ENCODE measurements at regions of chr20 and their contacts with region 1.

Region 1: DNA sequence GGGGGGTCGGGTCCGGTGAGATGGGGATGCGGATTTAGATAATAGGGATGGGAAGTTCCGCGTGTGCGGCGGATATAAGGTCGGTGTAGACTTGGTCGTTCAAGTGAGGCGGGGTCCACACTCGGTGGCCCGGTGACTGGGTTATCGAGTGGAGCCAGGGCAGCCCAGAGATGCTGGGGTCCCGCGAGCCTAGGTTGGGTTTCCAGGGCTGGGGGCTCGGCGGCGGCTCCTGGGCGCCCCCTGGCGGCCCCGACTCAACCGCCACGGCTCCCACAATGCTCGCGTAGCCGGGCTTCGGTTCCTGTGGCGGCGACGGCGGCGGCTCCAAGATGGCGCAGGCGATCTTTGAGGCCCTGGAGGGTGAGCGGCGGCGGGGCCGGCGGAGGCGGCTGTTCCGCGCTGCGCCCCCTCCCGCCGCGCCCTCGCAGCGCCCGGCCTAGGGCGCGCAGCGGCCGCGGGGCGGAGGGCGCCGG is at the start of gene ZNF341:
- DNase-seq: peak; percentile 80 to 92 (median 88)
- H3K4me3 ChIP-seq: peak within 1 kb of the TSS; percentile 61
- H3K4me3 Mint-ChIP-seq: peak within 1 kb of the TSS; percentile 89 to 93 (median 90)
- H3K27ac ChIP-seq: peak within 1 kb of the TSS; percentile 60
- H3K27ac Mint-ChIP-seq: peak within 1 kb of the TSS; percentile 90 to 98 (median 96)
- H3K4me1 ChIP-seq: peaks cover 16% of the 10 kb centered on the region
- H3K4me1 Mint-ChIP-seq: peaks cover 24 to 28% (median 25%) of the 10 kb centered on the region in 3 donors
- H3K27me3 ChIP-seq: no peaks in the 10 kb centered on the region
- H3K27me3 Mint-ChIP-seq: peaks cover 0 to 2% of the 10 kb centered on the region in 2 donors
- total RNA-seq, gene ZNF341: 4.5 to 5.0 TPM

Region 2: DNA sequence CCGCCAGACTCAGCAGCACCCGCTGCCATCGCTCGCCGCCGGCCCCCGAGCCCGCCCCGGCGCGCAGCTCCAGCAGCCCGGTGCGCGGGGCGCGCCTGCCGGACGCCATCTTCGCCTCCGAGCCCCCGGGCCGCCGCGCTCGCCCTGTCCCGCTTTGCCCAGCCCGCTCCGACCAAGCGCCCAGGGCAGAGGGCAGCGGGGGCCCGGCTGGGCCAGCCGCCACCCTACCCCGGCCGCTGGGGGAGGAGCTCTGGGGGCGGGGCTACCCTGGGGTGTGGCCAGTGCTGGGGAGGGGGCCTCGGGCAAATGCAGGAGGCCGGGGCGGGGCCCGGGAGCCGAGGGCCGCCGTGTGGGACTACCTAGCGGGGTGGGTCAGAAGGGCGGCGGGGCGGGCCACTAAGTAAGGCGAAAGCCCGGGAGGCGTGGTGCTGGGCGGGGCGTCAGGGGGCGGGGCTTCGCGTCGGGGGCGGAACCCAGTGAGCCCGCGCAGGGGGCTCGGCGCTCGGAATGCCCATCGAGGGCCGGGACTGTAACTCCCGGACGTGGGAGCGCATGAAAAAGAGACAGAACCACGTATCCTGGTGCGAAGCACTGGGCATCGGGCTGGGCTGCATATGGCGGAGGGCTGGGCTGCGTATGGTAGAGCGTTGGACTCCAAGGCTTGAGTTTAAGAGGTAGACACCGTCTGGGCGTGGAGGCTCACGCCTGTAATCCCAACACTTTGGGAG is 288.1 kb before region 1 on chr20 and contains the start of gene SNTA1:
- CTCF ChIA-PET with region 1: interaction called, 3 read pairs
- POLR2A ChIA-PET with region 1: interaction called, 11 read pairs
- DNase-seq: peak; percentile 70 to 92 (median 83)
- H3K4me3 ChIP-seq: peak within 1 kb of the TSS; percentile 87
- H3K4me3 Mint-ChIP-seq: peak within 1 kb of the TSS; percentile 89 to 96 (median 93)
- H3K27ac ChIP-seq: peak within 1 kb of the TSS; percentile 65
- H3K27ac Mint-ChIP-seq: peak within 1 kb of the TSS; percentile 88 to 98 (median 94)
- H3K4me1 ChIP-seq: peaks cover 19% of the 10 kb centered on the region
- H3K4me1 Mint-ChIP-seq: peaks cover 17 to 26% (median 19%) of the 10 kb centered on the region in 3 donors
- H3K27me3 ChIP-seq: no peaks in the 10 kb centered on the region
- H3K27me3 Mint-ChIP-seq: peaks cover 0 to 1% of the 10 kb centered on the region in 2 donors
- total RNA-seq, gene SNTA1: 4.6 to 5.6 TPM

Region 3: GRCh38 chr20:33489495-33490022 is 242.2 kb before region 1 on chr20:
- CTCF ChIA-PET with region 1: no interaction called
- POLR2A ChIA-PET with region 1: interaction called, 10 read pairs
- DNase-seq: peak; percentile 99
- H3K4me3 ChIP-seq: peak overlapping the region; percentile 68
- H3K4me3 Mint-ChIP-seq: peak overlapping the region; percentile 83 to 95 (median 91)
- H3K27ac ChIP-seq: peak overlapping the region; percentile 88
- H3K27ac Mint-ChIP-seq: peak overlapping the region; percentile 91 to 97 (median 94)
- H3K4me1 ChIP-seq: peaks cover 10% of the 10 kb centered on the region
- H3K4me1 Mint-ChIP-seq: peaks cover 13 to 34% (median 19%) of the 10 kb centered on the region in 3 donors
- H3K27me3 ChIP-seq: no peaks in the 10 kb centered on the region
- H3K27me3 Mint-ChIP-seq: peaks cover 0 to 2% of the 10 kb centered on the region in 2 donors

Region 4: DNA sequence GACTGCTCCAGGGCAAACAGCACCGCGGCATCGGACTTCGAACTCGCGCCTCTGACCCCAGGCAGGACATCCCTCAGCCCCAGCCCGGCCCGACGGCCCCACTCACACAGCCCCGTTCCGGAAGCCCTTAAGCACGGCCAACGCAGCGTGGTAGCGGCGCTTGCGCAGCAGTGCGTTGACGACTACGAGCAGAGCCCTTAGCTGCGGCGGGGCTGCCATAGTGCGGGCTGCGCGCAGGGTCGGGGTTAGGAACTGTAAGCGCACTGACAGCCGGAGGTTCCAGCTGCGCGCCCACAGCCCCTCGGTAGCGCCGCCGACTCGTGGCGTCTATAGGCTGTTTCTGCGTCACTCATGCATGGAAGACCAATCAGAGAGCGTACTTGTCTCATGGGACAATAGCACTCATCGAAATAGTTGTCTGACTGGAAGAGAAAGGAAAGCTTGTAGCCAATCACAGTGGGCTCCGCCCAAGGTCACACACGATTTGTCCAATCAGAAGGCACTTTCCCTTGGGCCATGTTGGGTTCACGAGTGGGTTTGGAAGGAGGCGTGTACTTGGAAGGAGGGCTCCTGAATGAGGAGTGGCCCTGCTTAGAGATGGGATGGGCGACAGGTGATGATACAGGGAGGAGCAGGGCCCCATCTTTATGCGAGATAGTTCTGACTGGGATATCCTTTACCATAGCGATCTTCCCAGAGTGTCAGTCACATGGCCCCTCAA is 11.6 kb before region 1 on chr20 and contains the start of gene PXMP4:
- CTCF ChIA-PET with region 1: interaction called, 7 read pairs
- POLR2A ChIA-PET with region 1: interaction called, 36 read pairs
- DNase-seq: peak; percentile 76 to 94 (median 92)
- H3K4me3 ChIP-seq: peak within 1 kb of the TSS; percentile 84
- H3K4me3 Mint-ChIP-seq: peak within 1 kb of the TSS; percentile 80 to 95 (median 87)
- H3K27ac ChIP-seq: peak within 1 kb of the TSS; percentile 75
- H3K27ac Mint-ChIP-seq: peak within 1 kb of the TSS; percentile 70 to 98 (median 92)
- H3K4me1 ChIP-seq: peaks cover 20% of the 10 kb centered on the region
- H3K4me1 Mint-ChIP-seq: peaks cover 28 to 41% (median 35%) of the 10 kb centered on the region in 3 donors
- H3K27me3 ChIP-seq: no peaks in the 10 kb centered on the region
- H3K27me3 Mint-ChIP-seq: peaks cover 0 to 2% of the 10 kb centered on the region in 2 donors
- total RNA-seq, gene PXMP4: 8.4 to 9.1 TPM

Region 5: DNA sequence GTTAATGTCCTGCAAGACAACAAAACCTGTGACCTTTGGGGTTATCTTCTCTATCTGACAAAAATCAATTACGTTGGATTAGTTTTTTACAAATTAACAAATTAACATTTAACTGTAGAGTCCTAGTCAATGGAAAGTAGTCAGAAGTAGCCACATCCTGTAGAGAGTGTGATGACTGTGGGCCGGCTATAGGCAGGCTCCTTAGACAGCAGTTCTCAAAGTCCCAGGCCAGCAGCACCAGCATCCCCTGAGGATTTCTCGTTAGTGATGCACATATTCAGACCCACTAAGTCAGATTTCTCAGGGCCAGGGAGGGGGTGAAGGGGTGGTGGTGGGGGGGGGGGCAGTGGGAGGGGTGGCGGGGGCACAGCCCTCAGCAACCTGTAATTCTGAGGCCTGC is 37.3 kb after region 1 on chr20:
- CTCF ChIA-PET with region 1: no interaction called
- POLR2A ChIA-PET with region 1: no interaction called
- DNase-seq: no peak
- H3K4me3 ChIP-seq: no peak overlapping the region
- H3K4me3 Mint-ChIP-seq: no peak overlapping the region
- H3K27ac ChIP-seq: no peak overlapping the region
- H3K27ac Mint-ChIP-seq: no peak overlapping the region
- H3K4me1 ChIP-seq: no peaks in the 10 kb centered on the region
- H3K4me1 Mint-ChIP-seq: peaks cover 0 to 6% (median 6%) of the 10 kb centered on the region in 3 donors
- H3K27me3 ChIP-seq: no peaks in the 10 kb centered on the region
- H3K27me3 Mint-ChIP-seq: no peaks in the 10 kb centered on the region

Measured in CD8-positive, alpha-beta memory T cell (primary cell).